Left ventricle myocardium inferior (tissue), 1 donor: ENCODE measurements at regions of chr12 and their contacts with region 1.

Region 1: DNA sequence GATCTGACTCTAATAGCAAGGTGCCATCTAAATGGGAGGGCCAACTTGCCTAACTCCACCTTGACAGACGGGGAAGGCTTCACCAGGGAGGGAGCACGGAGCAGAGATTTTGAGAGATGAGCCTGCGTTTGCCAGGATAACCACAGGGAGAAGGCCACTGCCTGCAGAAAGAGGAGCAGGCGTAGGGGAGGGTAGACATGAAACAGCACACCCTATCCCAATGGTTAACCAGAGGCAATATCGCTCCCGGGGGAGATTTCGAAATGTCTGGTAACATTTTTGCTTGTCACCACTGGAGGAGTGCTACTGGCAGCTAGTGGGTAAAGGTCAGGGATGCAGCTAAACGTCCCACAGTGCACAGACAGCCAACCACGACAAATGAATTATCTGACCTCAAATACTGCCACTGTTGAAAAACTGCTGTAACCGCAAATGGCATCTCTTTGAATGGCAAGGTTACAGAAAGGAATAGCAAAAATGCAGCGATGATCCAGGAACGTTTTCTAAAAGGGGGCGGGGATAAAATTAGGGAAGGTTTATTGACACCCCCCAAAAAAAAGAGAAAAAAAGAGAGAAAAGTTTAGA is 126.0 kb upstream of the ATF7IP start:
- DNase-seq: no peak
- H3K4me3 ChIP-seq: peak overlapping the region; percentile 5
- H3K27ac ChIP-seq: peak overlapping the region; percentile 33
- H3K4me1 ChIP-seq: peaks cover 14% of the 10 kb centered on the region
- H3K27me3 ChIP-seq: no peaks in the 10 kb centered on the region
- CTCF ChIP-seq: no peak

Region 2: DNA sequence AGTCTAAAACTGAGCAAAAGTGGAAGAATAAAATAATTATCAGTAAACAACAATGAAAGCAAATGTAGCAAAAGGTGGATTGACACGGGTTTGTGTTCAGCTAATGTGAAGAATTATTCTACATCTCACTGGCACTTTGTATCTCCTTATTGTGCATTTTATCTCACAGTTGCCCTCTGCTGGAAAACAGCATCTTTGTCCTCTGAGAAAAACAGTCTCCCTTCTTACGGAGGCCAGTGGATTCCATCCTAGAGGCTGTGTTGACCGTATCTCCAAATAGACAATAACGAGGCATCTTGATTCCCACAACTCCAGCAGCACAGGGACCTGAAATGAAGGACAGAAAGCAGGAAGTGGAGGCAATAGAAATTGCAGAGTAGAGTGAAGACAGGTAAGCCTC is 379.5 kb after region 1 on chr12:
- intact Hi-C with region 1: loop called (anchors 5 kb)
- DNase-seq: no peak
- H3K4me3 ChIP-seq: no peak overlapping the region
- H3K27ac ChIP-seq: no peak overlapping the region
- H3K4me1 ChIP-seq: peaks cover 31% of the 10 kb centered on the region
- H3K27me3 ChIP-seq: no peaks in the 10 kb centered on the region
- CTCF ChIP-seq: peak; percentile 64

Region 3: GRCh38 chr12:15050659-15051058 is 811.2 kb after region 1 on chr12:
- intact Hi-C with region 1: no loop called
- DNase-seq: no peak
- H3K4me3 ChIP-seq: no peak overlapping the region
- H3K27ac ChIP-seq: no peak overlapping the region
- H3K4me1 ChIP-seq: no peaks in the 10 kb centered on the region
- H3K27me3 ChIP-seq: no peaks in the 10 kb centered on the region
- CTCF ChIP-seq: no peak